PC-9 (cell line): ENCODE measurements at regions of chr5 and their contacts with region 1.

Region 1: GRCh38 chr5:72307968-72308852 is 11.8 kb downstream of the MRPS27 start:
- DNase-seq: peak; percentile 93 to 97
- H3K4me3 ChIP-seq: peak overlapping the region; percentile 73
- H3K27ac ChIP-seq: peak overlapping the region; percentile 86
- H3K4me1 ChIP-seq: peaks cover 13% of the 10 kb centered on the region
- H3K27me3 ChIP-seq: no peaks in the 10 kb centered on the region
- CTCF ChIP-seq: peak; percentile 77

Region 2: DNA sequence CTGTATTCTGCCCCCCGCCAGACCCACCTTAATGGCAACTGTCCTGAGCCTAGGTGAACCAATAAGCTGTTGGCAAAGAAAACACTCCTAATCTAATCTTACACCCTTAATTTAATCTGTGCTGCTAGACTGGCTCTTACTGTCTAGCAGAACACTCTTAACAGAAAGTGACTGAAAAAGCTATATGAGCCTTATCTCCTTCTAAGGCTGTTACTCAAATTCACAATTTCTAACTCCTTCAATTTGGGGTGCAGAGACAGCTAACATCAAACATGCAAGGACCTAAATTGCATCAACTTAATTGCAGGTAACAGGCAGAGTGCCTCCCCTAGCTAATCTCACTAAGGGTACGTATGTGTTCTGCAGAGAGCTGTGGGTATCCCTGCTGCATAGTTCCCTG is 250.4 kb before region 1 on chr5:
- CTCF ChIA-PET with region 1: no interaction called
- POLR2A ChIA-PET with region 1: no interaction called
- intact Hi-C with region 1: no loop called
- DNase-seq: no peak
- H3K4me3 ChIP-seq: no peak overlapping the region
- H3K27ac ChIP-seq: no peak overlapping the region
- H3K4me1 ChIP-seq: no peaks in the 10 kb centered on the region
- H3K27me3 ChIP-seq: no peaks in the 10 kb centered on the region
- CTCF ChIP-seq: no peak

Region 3: DNA sequence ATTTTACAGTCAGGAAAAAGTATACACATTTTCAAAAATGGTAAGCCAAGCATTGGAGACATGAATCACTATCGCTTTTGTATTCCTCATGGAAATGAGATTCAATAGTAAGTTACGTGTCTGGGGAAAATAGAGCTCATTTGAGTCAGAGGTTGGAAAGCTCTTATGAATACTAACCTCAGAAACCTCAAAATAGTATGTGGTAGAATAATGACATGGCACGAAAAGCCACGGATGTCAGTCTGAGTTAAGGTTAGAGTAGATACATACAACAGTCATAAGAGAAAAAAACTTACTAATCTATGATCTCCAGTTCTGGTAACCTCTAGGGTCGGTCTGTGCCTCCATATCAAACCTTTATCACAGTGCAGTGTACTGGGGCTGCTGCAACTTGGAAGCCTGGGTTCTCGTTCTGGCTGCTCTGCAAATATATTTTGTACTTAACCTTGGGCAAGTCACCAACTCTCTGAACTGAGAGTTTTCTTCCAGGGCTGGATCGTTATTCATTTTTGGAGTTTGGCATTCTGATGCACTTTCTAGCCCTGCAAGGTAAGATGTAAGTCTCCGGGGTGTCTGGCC is 169.2 kb before region 1 on chr5:
- CTCF ChIA-PET with region 1: no interaction called
- POLR2A ChIA-PET with region 1: interaction called, 5 read pairs
- intact Hi-C with region 1: loop called (anchors 5 kb)
- DNase-seq: no peak
- H3K4me3 ChIP-seq: no peak overlapping the region
- H3K27ac ChIP-seq: no peak overlapping the region
- H3K4me1 ChIP-seq: peaks cover 27% of the 10 kb centered on the region
- H3K27me3 ChIP-seq: no peaks in the 10 kb centered on the region
- CTCF ChIP-seq: no peak